ENCODE measurements at regions of chr11 and their contacts with region 1.

Region 1: GRCh38 chr11:83292709-83293456 is 6.7 kb upstream of the CCDC90B start:
- DNase-seq: peak; percentile 29
- H3K4me3 ChIP-seq: peak overlapping the region; percentile 34; the same call in 1 of the 2 replicates
- H3K27ac ChIP-seq: no peak overlapping the region
- H3K27me3 ChIP-seq: no peaks in the 10 kb centered on the region
- CTCF ChIP-seq: peak; percentile 84

Region 2: GRCh38 chr11:83282084-83282716 is 10.7 kb before region 1 on chr11:
- CTCF ChIA-PET with region 1: interaction called, 21 read pairs
- POLR2A ChIA-PET with region 1: no interaction called
- DNase-seq: no peak
- H3K4me3 ChIP-seq: no peak overlapping the region
- H3K27ac ChIP-seq: no peak overlapping the region
- H3K27me3 ChIP-seq: no peaks in the 10 kb centered on the region
- CTCF ChIP-seq: no peak

Region 3: DNA sequence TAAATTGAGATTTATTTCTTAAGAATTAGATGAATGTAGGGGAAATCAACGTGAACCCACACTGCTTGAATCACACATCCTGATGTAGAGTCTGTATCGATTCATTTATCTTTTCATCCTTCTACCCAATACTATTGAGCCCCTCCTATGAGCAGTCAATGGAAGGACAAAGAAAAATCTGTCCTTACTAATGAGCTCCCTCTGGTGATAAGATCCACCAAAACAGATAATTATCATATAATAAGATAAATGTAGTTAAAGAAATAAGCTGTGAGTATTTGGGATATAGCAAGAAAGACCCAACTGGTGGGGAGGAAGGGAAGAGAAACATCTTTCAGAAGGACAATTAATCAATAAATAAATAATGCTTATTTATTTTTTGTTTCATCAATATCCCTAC is 378.4 kb after region 1 on chr11:
- CTCF ChIA-PET with region 1: interaction called, 27 read pairs
- POLR2A ChIA-PET with region 1: no interaction called
- DNase-seq: no peak
- H3K4me3 ChIP-seq: no peak overlapping the region
- H3K27ac ChIP-seq: no peak overlapping the region
- H3K27me3 ChIP-seq: no peaks in the 10 kb centered on the region
- CTCF ChIP-seq: no peak

Region 4: DNA sequence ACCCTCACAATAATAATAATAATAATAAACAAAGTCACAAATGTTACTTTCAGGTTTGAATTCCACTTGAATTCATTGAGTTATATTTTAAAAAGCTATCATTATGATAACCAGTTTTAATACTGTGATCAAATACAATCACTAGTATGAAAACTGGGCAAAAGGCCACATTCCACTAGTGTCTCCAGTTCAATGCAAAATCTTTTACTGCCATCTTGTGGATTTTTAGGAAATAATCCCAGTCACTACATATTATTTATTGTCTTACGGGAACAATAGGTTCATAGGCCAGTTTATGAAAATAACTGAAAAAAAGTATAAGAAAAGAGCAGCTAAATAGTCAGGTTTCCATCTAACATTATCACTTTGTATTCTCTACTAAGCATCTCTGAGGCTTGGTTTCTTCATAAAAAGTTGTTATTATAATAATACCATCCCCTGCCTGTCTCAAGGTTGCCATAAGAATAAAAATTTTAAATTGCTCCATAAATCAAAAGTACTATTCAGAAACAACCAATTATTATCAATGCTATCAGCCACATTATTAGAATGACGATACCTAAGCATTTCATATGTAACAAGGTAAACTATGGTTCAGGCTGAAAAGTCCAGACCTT is 527.2 kb after region 1 on chr11:
- CTCF ChIA-PET with region 1: interaction called, 330 read pairs
- POLR2A ChIA-PET with region 1: no interaction called
- DNase-seq: peak; percentile 52
- H3K4me3 ChIP-seq: no peak overlapping the region
- H3K27ac ChIP-seq: no peak overlapping the region
- H3K27me3 ChIP-seq: no peaks in the 10 kb centered on the region
- CTCF ChIP-seq: peak; percentile 58